Naive thymus-derived CD4-positive, alpha-beta T cell (primary cell): ENCODE measurements at regions of chr3 and their contacts with region 1.

Region 1: GRCh38 chr3:188624384-188624783 is 470.4 kb downstream of the LPP start:
- DNase-seq: no peak
- ATAC-seq: no peak
- H3K4me3 ChIP-seq: no peak overlapping the region
- H3K4me3 Mint-ChIP-seq: no peak overlapping the region
- H3K27ac ChIP-seq: no peak overlapping the region
- H3K27ac Mint-ChIP-seq: peak overlapping the region in 1 of 9 donors; percentile 38
- H3K4me1 ChIP-seq: no peaks in the 10 kb centered on the region
- H3K4me1 Mint-ChIP-seq: peaks cover 0 to 10% (median 0%) of the 10 kb centered on the region in 7 donors
- H3K27me3 ChIP-seq: no peaks in the 10 kb centered on the region
- H3K27me3 Mint-ChIP-seq: no peaks in the 10 kb centered on the region

Region 2: GRCh38 chr3:188605231-188605630 is 19.2 kb before region 1 on chr3:
- CTCF ChIA-PET with region 1: no interaction called
- POLR2A ChIA-PET with region 1: no interaction called
- intact Hi-C with region 1: no loop called
- DNase-seq: no peak
- ATAC-seq: no peak
- H3K4me3 ChIP-seq: no peak overlapping the region
- H3K4me3 Mint-ChIP-seq: no peak overlapping the region
- H3K27ac ChIP-seq: no peak overlapping the region
- H3K27ac Mint-ChIP-seq: no peak overlapping the region
- H3K4me1 ChIP-seq: no peaks in the 10 kb centered on the region
- H3K4me1 Mint-ChIP-seq: peaks cover 0 to 5% (median 0%) of the 10 kb centered on the region in 7 donors
- H3K27me3 ChIP-seq: no peaks in the 10 kb centered on the region
- H3K27me3 Mint-ChIP-seq: no peaks in the 10 kb centered on the region

Region 3: DNA sequence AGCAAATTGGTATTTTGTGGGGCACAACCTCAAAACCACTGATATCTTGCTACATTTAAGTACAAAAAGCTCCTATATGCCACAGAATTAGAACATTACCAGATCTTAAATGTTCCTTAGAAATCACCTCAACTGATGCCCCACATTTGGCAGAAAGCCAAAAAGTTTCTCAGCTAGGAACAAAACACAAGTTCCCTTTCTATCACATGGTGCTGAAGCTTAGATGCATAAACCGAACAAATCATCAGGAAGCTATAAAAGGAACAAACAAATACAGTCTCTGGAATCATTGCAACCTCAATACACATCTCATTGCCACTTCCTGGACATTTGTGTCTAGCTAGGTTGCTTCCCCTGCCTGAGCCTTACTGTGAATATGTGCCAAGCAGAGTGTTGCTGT is 22.2 kb after region 1 on chr3:
- CTCF ChIA-PET with region 1: no interaction called
- POLR2A ChIA-PET with region 1: no interaction called
- intact Hi-C with region 1: no loop called
- DNase-seq: peak in 1 of 9 donors; percentile 4
- ATAC-seq: peak; percentile 47
- H3K4me3 ChIP-seq: no peak overlapping the region
- H3K4me3 Mint-ChIP-seq: no peak overlapping the region
- H3K27ac ChIP-seq: no peak overlapping the region
- H3K27ac Mint-ChIP-seq: no peak overlapping the region
- H3K4me1 ChIP-seq: no peaks in the 10 kb centered on the region
- H3K4me1 Mint-ChIP-seq: peaks cover 0 to 11% (median 6%) of the 10 kb centered on the region in 7 donors
- H3K27me3 ChIP-seq: no peaks in the 10 kb centered on the region
- H3K27me3 Mint-ChIP-seq: no peaks in the 10 kb centered on the region

Region 4: DNA sequence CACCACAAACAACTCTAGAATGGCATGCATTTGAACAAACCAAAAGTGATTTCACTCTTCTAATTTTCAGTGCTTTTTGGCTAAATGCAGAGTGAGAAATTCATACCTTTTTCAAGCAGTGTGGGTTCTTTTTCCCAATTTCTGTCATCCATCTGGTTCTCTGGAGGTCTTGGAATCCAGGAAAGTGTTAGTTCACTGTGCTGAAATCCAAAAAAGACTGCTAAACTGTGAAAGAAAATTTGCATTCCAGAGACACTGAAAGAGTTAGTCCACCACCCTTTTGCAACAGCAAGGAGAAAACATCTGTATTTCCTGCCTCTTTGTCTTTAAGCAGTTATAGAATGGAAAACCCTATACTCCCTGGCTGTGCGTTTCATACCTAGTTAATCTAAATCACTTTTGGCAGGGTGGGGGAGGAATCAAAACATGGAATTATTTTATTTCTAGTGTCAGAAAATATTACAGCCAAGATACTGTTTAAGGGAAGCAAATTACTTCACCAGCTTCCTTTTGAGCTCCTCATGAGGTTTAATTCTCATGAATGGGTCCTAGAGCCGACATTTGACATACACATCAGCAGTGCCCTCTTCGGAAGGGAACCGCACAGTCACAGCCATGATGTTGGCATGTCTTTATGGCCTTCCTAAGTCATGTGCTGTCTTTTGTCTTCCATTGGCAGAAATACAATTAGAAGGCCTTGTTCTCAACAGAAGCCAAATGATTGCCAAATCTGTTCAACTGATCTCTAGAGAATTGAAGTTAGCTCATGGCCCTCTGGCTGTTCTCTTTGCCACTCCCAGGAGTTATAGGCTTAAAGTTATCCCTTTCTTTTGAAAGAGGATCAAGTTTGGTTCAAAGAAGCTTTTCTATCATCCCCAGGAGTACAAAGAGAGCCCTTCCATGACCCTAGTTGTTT is 229.7 kb after region 1 on chr3:
- CTCF ChIA-PET with region 1: no interaction called
- POLR2A ChIA-PET with region 1: no interaction called
- intact Hi-C with region 1: loop called in 1 of 2 experiments (anchors 10 kb)
- DNase-seq: no peak
- ATAC-seq: no peak
- H3K4me3 ChIP-seq: no peak overlapping the region
- H3K4me3 Mint-ChIP-seq: no peak overlapping the region
- H3K27ac ChIP-seq: no peak overlapping the region
- H3K27ac Mint-ChIP-seq: peak overlapping the region in 1 of 9 donors; percentile 4
- H3K4me1 ChIP-seq: no peaks in the 10 kb centered on the region
- H3K4me1 Mint-ChIP-seq: peaks cover 0 to 2% (median 0%) of the 10 kb centered on the region in 7 donors
- H3K27me3 ChIP-seq: no peaks in the 10 kb centered on the region
- H3K27me3 Mint-ChIP-seq: no peaks in the 10 kb centered on the region